ENCODE measurements at regions of chr15 and their contacts with region 1.

Region 1: DNA sequence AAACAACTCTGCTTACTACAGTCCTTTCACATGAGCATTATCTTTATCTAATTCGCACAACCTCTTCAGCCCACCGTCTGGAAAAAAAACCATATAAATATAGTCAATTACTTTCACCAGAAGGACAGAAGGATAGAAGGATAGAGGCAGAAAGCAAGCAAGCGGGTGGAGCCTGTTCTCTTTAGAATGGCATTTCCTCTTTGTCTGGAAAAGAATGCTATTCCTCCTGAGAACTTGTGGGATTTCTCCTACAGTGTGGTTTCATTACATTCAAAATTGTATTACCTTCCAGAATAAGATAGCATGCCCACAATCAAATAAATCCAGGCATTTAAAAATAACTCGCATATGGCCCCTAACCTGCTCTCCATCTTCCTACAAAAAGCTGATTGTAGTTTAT is 23.1 kb downstream of the SLC30A4 start:
- DNase-seq: no peak
- H3K4me3 ChIP-seq: no peak overlapping the region
- H3K27ac ChIP-seq: no peak overlapping the region
- H3K4me1 ChIP-seq: no peaks in the 10 kb centered on the region
- H3K27me3 ChIP-seq: no peaks in the 10 kb centered on the region
- CTCF ChIP-seq: no peak
- POLR2A ChIP-seq: no peak

Region 2: DNA sequence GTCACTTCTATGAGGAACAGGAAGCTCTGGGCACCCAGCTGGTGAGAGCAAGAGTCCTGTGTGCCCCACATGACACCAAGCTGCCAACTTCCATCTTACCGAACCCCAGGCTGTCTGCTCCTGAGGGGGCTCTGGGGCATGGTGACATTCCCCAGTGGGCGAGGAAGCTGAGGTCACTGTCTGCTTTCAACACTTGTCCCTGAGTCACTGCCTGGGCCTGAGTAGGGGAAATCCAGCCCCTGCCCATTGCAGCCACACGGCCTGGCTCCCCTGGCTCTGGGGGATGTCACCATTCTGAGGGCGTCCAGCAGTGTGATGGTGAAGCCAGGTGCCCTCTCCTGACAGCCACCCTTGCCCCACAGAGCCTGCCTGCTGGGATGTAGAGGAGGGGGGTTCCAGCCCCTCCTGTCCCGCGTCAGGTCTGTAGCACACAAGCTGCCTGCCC is 51.3 kb before region 1 on chr15:
- intact Hi-C with region 1: no loop called
- DNase-seq: no peak
- H3K4me3 ChIP-seq: no peak overlapping the region
- H3K27ac ChIP-seq: peak overlapping the region; percentile 37 to 57 (median 50)
- H3K4me1 ChIP-seq: peaks cover 6 to 48% (median 10%) of the 10 kb centered on the region in 3 donors
- H3K27me3 ChIP-seq: no peaks in the 10 kb centered on the region
- CTCF ChIP-seq: no peak
- POLR2A ChIP-seq: no peak

Region 3: DNA sequence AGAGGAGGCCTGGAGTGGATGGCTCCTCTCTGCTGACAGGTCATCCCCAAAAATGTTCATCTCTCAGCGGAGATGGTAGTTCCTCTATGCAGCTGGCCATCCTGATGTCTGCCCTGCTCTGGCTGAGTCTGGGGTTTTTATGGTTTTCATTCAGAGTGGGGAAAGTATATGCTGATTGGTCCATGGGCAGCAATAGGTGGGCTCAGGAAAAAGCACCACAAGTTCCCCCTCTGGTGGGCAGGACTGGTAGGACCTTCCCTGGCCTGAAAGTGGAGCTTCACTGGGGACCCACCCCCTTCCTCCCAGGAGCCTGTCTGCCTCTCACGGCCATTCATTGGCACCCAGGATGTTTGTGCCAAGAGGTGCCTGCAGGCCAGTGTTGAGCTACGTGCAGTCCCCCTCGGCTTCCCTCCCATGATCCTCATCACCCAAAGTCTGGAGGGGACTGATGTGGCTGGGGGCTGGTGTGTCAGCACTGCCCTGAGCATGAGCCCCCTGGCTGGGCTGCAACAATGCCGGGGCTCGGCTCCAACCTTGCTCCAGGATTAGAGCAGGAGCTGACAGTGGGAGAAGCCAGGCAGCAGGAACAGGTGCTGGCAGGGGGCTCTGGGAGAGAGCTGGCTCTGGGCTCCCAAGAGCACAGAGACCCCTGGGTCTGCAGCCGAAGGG is 74.7 kb after region 1 on chr15:
- intact Hi-C with region 1: loop called (anchors 10 kb)
- DNase-seq: no peak
- H3K4me3 ChIP-seq: no peak overlapping the region
- H3K27ac ChIP-seq: no peak overlapping the region
- H3K4me1 ChIP-seq: no peaks in the 10 kb centered on the region
- H3K27me3 ChIP-seq: peaks cover 0 to 20% (median 0%) of the 10 kb centered on the region in 4 donors
- CTCF ChIP-seq: no peak
- POLR2A ChIP-seq: no peak